ENCODE measurements at regions of chr1 and their contacts with region 1.

Region 1: GRCh38 chr1:199113265-199113869 is 474.5 kb downstream of the PTPRC start:
- DNase-seq: no peak
- H3K4me3 ChIP-seq: no peak overlapping the region
- H3K27ac ChIP-seq: no peak overlapping the region
- H3K27me3 ChIP-seq: no peaks in the 10 kb centered on the region
- CTCF ChIP-seq: peak; percentile 91

Region 2: GRCh38 chr1:198756470-198756869 is 356.9 kb before region 1 on chr1:
- CTCF ChIA-PET with region 1: interaction called, 19 read pairs
- POLR2A ChIA-PET with region 1: no interaction called
- DNase-seq: no peak
- H3K4me3 ChIP-seq: no peak overlapping the region
- H3K27ac ChIP-seq: no peak overlapping the region
- H3K27me3 ChIP-seq: no peaks in the 10 kb centered on the region
- CTCF ChIP-seq: peak; percentile 33; the same call in 1 of the 2 replicates

Region 3: DNA sequence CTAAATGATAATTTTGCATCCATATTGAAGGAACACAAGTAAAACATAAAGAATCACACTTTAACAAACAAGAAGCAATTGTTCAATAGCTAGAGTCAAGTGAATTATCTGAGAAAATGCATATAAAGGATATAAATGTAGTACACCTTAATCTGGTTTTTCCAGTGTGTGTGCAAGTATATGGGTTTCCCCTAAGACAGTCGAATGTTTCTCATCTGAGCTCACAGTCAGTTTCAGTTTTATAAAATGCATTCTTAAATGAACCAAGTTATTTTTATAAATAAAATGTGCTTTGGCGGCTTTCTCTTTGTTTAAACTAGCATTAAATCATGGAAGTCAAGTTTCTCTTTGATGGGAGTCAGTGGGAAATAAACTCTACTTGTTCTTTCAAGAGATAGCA is 348.6 kb before region 1 on chr1:
- CTCF ChIA-PET with region 1: interaction called, 12 read pairs
- POLR2A ChIA-PET with region 1: no interaction called
- DNase-seq: no peak
- H3K4me3 ChIP-seq: no peak overlapping the region
- H3K27ac ChIP-seq: no peak overlapping the region
- H3K27me3 ChIP-seq: no peaks in the 10 kb centered on the region
- CTCF ChIP-seq: no peak

Region 4: GRCh38 chr1:198771563-198772153 is 341.7 kb before region 1 on chr1:
- CTCF ChIA-PET with region 1: interaction called, 12 read pairs
- POLR2A ChIA-PET with region 1: no interaction called
- DNase-seq: peak; percentile 27
- H3K4me3 ChIP-seq: no peak overlapping the region
- H3K27ac ChIP-seq: no peak overlapping the region
- H3K27me3 ChIP-seq: no peaks in the 10 kb centered on the region
- CTCF ChIP-seq: peak; percentile 63

Region 5: DNA sequence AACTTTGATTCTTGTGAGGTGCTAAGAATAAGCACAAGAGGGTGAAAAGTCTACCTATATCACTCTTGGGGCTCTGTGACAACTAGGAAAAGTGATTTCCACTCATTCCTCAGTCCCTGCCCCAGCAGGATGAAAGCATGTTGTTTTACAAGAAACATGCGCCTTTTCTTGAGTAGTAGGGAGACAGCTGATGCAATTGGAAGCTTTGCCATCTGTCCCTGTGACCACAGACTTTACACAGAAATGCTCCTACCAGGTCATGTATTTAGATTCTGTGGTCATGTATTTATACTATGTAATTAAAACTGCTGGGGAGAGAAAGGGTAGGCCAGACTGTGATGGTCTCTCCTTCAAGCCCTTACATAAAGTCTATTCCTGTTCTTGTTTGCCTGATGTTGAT is 29.1 kb before region 1 on chr1:
- CTCF ChIA-PET with region 1: interaction called, 13 read pairs
- POLR2A ChIA-PET with region 1: no interaction called
- DNase-seq: peak; percentile 85
- H3K4me3 ChIP-seq: no peak overlapping the region
- H3K27ac ChIP-seq: peak overlapping the region; percentile 82
- H3K27me3 ChIP-seq: no peaks in the 10 kb centered on the region
- CTCF ChIP-seq: no peak

Region 6: GRCh38 chr1:199123615-199124014 is 10.2 kb after region 1 on chr1:
- CTCF ChIA-PET with region 1: interaction called, 28 read pairs
- POLR2A ChIA-PET with region 1: no interaction called
- DNase-seq: peak; percentile 74
- H3K4me3 ChIP-seq: no peak overlapping the region
- H3K27ac ChIP-seq: no peak overlapping the region
- H3K27me3 ChIP-seq: no peaks in the 10 kb centered on the region
- CTCF ChIP-seq: no peak